MCF 10A (cell line): ENCODE measurements at regions of chr6 and their contacts with region 1.

Region 1: GRCh38 chr6:157314705-157315321 is 8.5 kb downstream of the TMEM242 start:
- DNase-seq: peak; percentile 76
- H3K4me3 Mint-ChIP-seq: no peak overlapping the region
- H3K27ac Mint-ChIP-seq: no peak overlapping the region
- H3K4me1 Mint-ChIP-seq: peaks cover 12% of the 10 kb centered on the region
- H3K27me3 Mint-ChIP-seq: no peaks in the 10 kb centered on the region
- CTCF ChIP-seq: peak; percentile 79

Region 2: GRCh38 chr6:157107915-157108651 is 206.7 kb before region 1 on chr6:
- CTCF ChIA-PET with region 1: no interaction called
- POLR2A ChIA-PET with region 1: no interaction called
- intact Hi-C with region 1: no loop called
- DNase-seq: peak; percentile 62
- H3K4me3 Mint-ChIP-seq: no peak overlapping the region
- H3K27ac Mint-ChIP-seq: peak overlapping the region; percentile 79
- H3K4me1 Mint-ChIP-seq: peaks cover 26% of the 10 kb centered on the region
- H3K27me3 Mint-ChIP-seq: no peaks in the 10 kb centered on the region
- CTCF ChIP-seq: no peak

Region 3: DNA sequence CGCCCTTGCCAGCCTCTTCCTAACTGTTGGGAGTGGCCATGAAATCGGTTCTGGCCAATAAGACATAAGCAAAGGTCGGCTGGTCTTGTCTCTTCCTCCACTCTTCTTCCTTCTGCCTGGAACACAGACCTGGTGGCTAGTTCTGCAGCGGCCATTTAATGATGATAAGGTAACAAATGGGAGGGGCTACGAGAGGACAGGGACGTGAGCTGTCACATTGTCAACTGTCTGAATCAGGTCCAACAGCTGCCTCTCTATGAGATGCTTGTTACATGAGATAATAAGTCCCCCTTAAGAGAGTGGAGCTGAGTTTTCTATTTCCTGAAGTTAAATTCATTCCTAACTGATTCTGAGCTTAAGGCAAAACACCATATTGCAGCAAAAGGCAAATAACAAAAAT is 21.0 kb after region 1 on chr6:
- CTCF ChIA-PET with region 1: interaction called, 6 read pairs
- POLR2A ChIA-PET with region 1: interaction called, 3 read pairs
- intact Hi-C with region 1: loop called (anchors 1 kb)
- DNase-seq: no peak
- H3K4me3 Mint-ChIP-seq: no peak overlapping the region
- H3K27ac Mint-ChIP-seq: no peak overlapping the region
- H3K4me1 Mint-ChIP-seq: no peaks in the 10 kb centered on the region
- H3K27me3 Mint-ChIP-seq: peaks cover 1% of the 10 kb centered on the region
- CTCF ChIP-seq: no peak

Region 4: GRCh38 chr6:157597446-157598312 is 282.9 kb after region 1 on chr6:
- CTCF ChIA-PET with region 1: interaction called, 47 read pairs
- POLR2A ChIA-PET with region 1: no interaction called
- intact Hi-C with region 1: loop called (anchors 1 kb)
- DNase-seq: peak; percentile 57
- H3K4me3 Mint-ChIP-seq: no peak overlapping the region
- H3K27ac Mint-ChIP-seq: no peak overlapping the region
- H3K4me1 Mint-ChIP-seq: no peaks in the 10 kb centered on the region
- H3K27me3 Mint-ChIP-seq: no peaks in the 10 kb centered on the region
- CTCF ChIP-seq: peak; percentile 56

Region 5: GRCh38 chr6:157614026-157614568 is 299.3 kb after region 1 on chr6:
- CTCF ChIA-PET with region 1: interaction called, 8 read pairs
- POLR2A ChIA-PET with region 1: interaction called, 4 read pairs
- intact Hi-C with region 1: loop called (anchors 1 kb)
- DNase-seq: no peak
- H3K4me3 Mint-ChIP-seq: no peak overlapping the region
- H3K27ac Mint-ChIP-seq: peak overlapping the region; percentile 88
- H3K4me1 Mint-ChIP-seq: peaks cover 24% of the 10 kb centered on the region
- H3K27me3 Mint-ChIP-seq: no peaks in the 10 kb centered on the region
- CTCF ChIP-seq: peak; percentile 5